AG04450 (cell line): ENCODE measurements at regions of chr11 and their contacts with region 1.

Region 1: GRCh38 chr11:86608251-86608799 is 64.1 kb downstream of the ME3 start:
- DNase-seq: peak; percentile 57
- H3K4me3 ChIP-seq: no peak overlapping the region
- H3K27ac ChIP-seq: no peak overlapping the region
- H3K27me3 ChIP-seq: no peaks in the 10 kb centered on the region
- CTCF ChIP-seq: peak; percentile 94

Region 2: DNA sequence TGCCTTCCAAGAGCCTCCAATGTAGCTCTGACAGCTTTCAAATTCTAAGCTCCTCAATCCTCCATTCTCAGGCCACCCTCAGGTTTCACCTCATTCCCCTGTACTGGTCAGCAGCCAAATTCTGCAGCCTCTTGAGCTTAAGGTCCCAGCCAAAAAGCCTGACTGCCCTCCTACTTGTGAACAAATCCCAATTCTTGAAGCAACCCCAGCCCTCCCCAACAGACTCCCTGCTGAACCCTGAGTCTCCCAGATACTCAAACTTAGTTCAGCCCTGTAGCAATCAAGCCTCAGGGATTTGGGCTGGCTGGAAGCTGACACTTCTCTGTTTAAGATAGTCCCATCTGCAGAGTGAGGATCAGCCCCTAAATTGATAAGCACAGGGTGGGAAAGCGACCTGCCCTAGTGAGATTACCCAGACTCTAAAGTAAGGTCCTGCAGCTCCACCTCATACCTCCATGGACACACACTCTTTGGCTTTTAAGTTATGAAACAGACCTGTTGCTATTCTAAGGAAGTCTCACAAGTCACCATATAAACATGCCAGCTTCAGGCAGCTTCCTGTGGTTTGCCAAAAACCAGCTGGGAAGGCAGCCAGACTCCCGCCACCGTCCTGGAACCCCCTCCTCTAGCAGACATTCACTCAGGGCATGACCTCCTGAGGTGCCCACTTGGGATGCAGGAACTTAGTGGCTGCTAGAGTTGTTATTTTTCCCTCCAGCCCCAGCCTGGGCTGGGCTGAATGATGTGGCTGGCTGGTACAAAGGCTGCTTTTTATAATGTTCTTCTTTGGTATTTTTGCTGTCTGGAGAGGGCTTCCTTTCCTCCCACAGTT is 456.9 kb before region 1 on chr11:
- CTCF ChIA-PET with region 1: no interaction called
- POLR2A ChIA-PET with region 1: no interaction called
- DNase-seq: no peak
- H3K4me3 ChIP-seq: no peak overlapping the region
- H3K27ac ChIP-seq: peak overlapping the region; percentile 41
- H3K27me3 ChIP-seq: no peaks in the 10 kb centered on the region
- CTCF ChIP-seq: no peak

Region 3: GRCh38 chr11:86456052-86456939 is 152.0 kb before region 1 on chr11:
- CTCF ChIA-PET with region 1: interaction called, 73 read pairs
- POLR2A ChIA-PET with region 1: no interaction called
- DNase-seq: peak; percentile 66
- H3K4me3 ChIP-seq: no peak overlapping the region
- H3K27ac ChIP-seq: no peak overlapping the region
- H3K27me3 ChIP-seq: no peaks in the 10 kb centered on the region
- CTCF ChIP-seq: peak; percentile 93

Region 4: DNA sequence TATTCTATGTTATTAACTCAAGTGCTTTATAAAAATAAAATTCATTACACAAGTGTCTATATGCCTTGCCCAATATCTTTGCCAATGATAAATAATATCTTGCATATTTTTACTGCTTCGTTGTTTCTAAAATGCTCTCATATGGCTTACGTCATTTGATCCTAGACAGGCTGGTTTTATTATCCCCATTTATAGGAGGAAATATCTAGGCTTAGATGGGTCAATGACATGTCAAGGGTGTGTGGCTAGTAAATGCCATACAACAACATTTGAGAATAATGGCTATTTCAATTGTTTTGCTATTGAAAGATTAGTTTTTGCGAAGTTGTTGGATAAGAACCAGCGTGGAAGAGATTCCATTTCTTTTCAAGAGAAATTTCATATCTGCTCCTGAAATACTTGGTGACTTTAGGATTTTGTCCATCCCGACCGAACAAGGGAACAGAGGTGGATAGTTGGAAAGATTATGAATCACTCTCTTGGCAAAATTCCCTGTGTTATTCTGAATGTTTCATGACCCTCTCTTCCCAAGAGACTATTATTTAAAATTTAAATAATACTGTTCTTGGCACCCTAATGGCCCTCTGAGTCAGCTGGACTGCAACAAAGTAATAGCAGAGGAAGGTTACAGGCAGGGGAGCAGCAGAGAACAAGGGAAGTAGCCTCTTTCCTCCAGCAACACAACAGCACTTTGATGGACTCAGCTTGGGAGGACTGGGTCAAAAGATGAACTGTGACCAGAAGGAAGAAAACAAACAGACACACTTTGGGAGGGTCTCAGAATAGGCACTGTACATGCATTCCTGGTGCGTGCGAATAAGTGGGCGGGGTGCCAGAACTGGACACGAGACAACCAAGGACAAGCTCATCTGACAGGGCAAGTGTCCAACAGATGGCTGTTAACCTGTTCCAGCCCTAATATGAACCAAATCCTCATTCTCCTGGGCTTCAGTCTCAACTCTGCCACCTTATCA is 30.4 kb before region 1 on chr11:
- CTCF ChIA-PET with region 1: interaction called, 16 read pairs
- POLR2A ChIA-PET with region 1: no interaction called
- DNase-seq: peak; percentile 38
- H3K4me3 ChIP-seq: no peak overlapping the region
- H3K27ac ChIP-seq: no peak overlapping the region
- H3K27me3 ChIP-seq: no peaks in the 10 kb centered on the region
- CTCF ChIP-seq: no peak

Region 5: DNA sequence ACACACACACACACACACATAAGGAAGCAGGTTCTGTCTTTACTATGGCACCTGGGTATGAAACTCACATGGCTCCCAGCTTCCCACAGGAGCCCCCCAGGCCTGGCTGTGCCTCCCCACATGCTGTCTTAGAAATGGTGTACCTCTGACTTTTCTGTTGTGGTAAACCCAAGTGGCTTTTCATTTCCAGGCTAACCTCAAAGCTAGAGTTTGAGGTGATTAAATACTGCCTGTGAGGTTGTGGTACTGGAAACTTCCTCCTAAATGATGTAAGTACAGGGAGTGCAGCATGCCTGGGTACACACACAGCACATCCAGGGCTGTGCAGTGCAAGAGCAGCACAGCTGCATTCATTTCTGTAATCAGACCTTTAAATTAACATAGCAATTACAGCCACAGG is 29.7 kb after region 1 on chr11:
- CTCF ChIA-PET with region 1: interaction called, 24 read pairs
- POLR2A ChIA-PET with region 1: no interaction called
- DNase-seq: no peak
- H3K4me3 ChIP-seq: no peak overlapping the region
- H3K27ac ChIP-seq: no peak overlapping the region
- H3K27me3 ChIP-seq: no peaks in the 10 kb centered on the region
- CTCF ChIP-seq: no peak

Region 6: GRCh38 chr11:86761978-86762377 is 153.7 kb after region 1 on chr11:
- CTCF ChIA-PET with region 1: interaction called, 17 read pairs
- POLR2A ChIA-PET with region 1: no interaction called
- DNase-seq: no peak
- H3K4me3 ChIP-seq: no peak overlapping the region
- H3K27ac ChIP-seq: peak overlapping the region; percentile 50
- H3K27me3 ChIP-seq: no peaks in the 10 kb centered on the region
- CTCF ChIP-seq: no peak

Region 7: GRCh38 chr11:86775342-86775741 is 167.0 kb after region 1 on chr11:
- CTCF ChIA-PET with region 1: no interaction called
- POLR2A ChIA-PET with region 1: no interaction called
- DNase-seq: no peak
- H3K4me3 ChIP-seq: no peak overlapping the region
- H3K27ac ChIP-seq: no peak overlapping the region
- H3K27me3 ChIP-seq: no peaks in the 10 kb centered on the region
- CTCF ChIP-seq: no peak

Region 8: GRCh38 chr11:86818466-86819192 is 210.3 kb after region 1 on chr11:
- CTCF ChIA-PET with region 1: interaction called, 47 read pairs
- POLR2A ChIA-PET with region 1: no interaction called
- DNase-seq: peak; percentile 57
- H3K4me3 ChIP-seq: no peak overlapping the region
- H3K27ac ChIP-seq: no peak overlapping the region
- H3K27me3 ChIP-seq: no peaks in the 10 kb centered on the region
- CTCF ChIP-seq: peak; percentile 64

Region 9: GRCh38 chr11:87213444-87213843 is 605.1 kb after region 1 on chr11:
- CTCF ChIA-PET with region 1: no interaction called
- POLR2A ChIA-PET with region 1: no interaction called
- DNase-seq: no peak
- H3K4me3 ChIP-seq: no peak overlapping the region
- H3K27ac ChIP-seq: no peak overlapping the region
- H3K27me3 ChIP-seq: no peaks in the 10 kb centered on the region
- CTCF ChIP-seq: no peak